ENCODE measurements at regions of chr7 and their contacts with region 1.

Region 1: DNA sequence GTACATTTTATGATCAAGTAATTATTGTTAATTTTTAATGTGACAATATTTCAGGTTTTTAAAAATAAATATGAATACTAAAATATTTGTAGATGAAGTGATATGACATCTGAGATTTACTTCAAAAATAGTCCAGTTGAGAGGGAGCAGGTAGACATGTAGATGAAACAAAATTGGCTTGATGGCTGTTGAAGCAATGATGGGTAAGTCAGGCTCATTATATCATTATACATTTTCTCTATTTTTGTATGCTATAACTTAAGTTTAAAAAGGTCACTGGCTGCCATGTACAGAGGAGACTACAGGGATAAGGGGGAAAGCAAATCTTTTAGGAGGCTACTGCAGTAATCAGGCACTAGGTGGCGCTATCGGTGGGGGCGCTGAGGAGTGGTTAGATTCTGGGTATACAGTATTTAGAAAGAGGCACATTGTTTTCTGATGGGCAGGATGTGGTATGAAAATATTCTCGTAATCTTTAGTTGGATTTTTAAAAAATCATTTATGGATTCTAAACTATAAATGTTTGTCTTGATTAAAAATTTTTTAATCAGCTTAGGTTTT is 189.8 kb upstream of the IMMP2L start:
- DNase-seq: peak; percentile 87
- H3K4me3 Mint-ChIP-seq: no peak overlapping the region
- H3K27ac Mint-ChIP-seq: no peak overlapping the region
- H3K4me1 Mint-ChIP-seq: no peaks in the 10 kb centered on the region
- H3K27me3 Mint-ChIP-seq: peaks cover 13% of the 10 kb centered on the region

Region 2: GRCh38 chr7:112414855-112415490 is 662.9 kb after region 1 on chr7:
- intact Hi-C with region 1: loop called (anchors 5 kb)
- DNase-seq: no peak
- H3K4me3 Mint-ChIP-seq: no peak overlapping the region
- H3K27ac Mint-ChIP-seq: no peak overlapping the region
- H3K4me1 Mint-ChIP-seq: peaks cover 5% of the 10 kb centered on the region
- H3K27me3 Mint-ChIP-seq: peaks cover 29% of the 10 kb centered on the region

Region 3: GRCh38 chr7:112495810-112496462 is 743.8 kb after region 1 on chr7:
- intact Hi-C with region 1: loop called (anchors 2 kb)
- DNase-seq: peak; percentile 76
- H3K4me3 Mint-ChIP-seq: no peak overlapping the region
- H3K27ac Mint-ChIP-seq: no peak overlapping the region
- H3K4me1 Mint-ChIP-seq: no peaks in the 10 kb centered on the region
- H3K27me3 Mint-ChIP-seq: peaks cover 20% of the 10 kb centered on the region